Astrocyte of the cerebellum (primary cell): ENCODE measurements at regions of chr13 and their contacts with region 1.

Region 1: DNA sequence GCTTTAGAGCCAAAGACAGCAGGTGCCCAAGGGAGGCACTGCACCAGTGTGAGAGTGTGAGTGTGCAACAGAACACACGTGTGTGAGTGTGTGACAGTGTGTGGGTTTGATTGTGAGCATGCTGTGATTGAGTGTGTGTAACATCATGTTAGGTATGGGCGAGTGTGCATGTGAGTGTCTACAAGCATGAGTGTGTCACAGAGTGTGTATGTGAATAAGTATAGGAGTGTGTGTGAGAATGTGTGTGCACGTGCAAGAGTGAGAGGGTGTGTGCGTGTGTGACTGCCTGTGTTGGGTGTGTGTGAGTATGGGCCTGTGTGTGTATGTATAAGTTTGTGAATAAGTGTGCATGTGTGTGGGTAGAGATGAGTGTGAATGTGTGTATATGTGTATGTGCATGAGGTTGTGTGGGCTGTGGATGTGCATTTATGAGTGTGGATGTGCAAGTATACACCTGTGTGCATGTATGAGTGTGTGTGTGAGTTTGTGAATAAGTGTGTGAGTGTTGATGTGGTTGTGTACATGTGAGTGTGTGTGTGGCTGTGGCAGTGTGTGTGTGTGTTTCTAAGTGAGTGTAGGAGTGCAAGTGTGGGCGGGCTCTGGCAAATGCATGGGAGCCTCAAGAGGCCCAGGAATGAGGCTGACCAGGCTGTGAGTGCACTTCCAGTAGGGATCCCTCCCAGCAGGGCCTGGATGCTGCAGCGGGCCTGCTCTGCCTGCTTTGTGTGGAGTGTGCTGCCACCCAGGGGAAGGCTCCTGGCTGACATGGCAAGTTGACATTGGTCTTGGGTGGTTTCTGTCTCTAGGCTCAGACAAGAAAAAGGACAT is 198.4 kb downstream of the COL4A1 start:
- DNase-seq: peak; percentile 70
- H3K4me3 ChIP-seq: no peak overlapping the region
- CTCF ChIP-seq: peak; percentile 82

Region 2: DNA sequence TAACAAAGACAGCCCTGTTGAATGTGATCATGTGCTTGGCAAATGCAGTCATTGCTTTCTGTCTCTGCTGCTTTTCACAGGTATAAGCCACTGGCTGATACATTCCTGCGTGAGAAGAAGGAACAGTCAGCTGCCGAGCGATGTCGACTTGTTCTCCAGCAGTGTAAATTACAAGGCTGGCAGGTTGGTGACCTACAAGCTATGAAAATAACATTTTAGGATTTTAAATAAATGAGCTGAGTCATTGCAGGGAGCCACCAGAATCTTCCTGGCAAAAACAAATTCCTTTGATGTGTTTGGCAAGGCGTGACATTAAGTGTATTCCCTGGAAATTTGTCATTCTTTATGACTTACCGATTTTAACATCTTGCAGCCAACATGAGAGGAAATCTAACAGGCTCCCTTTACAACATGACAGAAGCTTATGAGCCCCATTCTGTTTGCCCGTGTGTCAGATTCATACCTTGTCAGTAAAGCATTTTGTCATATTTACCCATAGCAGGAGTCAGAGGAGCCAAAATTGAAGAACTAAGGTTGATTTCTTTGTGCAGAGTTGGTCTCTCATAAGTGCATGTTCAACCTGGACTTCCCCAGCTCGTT is 1007.8 kb before region 1 on chr13:
- in situ Hi-C with region 1: loop called (anchors 10 kb)
- DNase-seq: no peak
- H3K4me3 ChIP-seq: no peak overlapping the region
- CTCF ChIP-seq: no peak

Region 3: GRCh38 chr13:110017379-110017778 is 91.2 kb before region 1 on chr13:
- in situ Hi-C with region 1: no loop called
- DNase-seq: peak; percentile 72
- H3K4me3 ChIP-seq: no peak overlapping the region
- CTCF ChIP-seq: no peak